Activated naive CD8-positive, alpha-beta T cell treated with anti-CD3 and anti-CD28 coated beads, Interleukin-2, amount 10 ng/mL, durations not matched to agents 7 days and 5 days (primary cell): ENCODE measurements at regions of chr5 and their contacts with region 1.

Region 1: DNA sequence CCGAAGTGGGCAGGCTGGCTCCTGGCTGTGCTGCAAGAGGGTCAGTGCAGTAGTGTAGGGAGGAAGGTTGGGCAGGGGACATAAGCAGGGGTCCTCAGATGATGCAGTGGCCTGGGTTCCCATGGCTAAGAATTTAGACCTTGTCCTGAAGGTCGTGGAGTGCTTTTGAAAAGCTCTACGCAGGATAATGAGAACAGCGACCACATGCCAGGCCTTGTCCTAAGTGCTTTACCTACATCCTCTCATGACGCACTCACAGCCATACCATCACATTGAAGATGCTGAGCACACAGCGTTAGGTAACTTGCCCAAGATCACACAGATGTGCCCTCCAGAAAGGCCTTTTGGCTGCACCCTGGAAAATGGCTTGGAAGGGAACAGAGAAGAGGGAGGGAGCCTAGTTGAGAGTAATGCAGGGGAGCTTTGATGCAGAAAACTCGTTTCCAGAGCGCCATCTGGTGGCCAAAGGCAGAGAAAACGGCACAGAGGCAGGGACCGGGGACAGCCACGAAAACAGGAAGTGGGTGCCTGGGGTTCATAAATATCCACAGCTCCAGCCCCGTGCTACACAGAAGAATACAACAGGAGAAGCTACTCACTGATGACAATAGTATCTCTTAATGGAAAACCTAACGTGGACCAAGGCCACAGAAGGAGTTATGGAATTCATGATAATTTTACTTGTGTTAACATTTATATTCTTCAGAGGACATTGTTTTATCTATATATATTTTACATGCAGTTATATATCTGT is 2.6 kb upstream of the PCDH12 start:
- DNase-seq: peak; percentile 87
- ATAC-seq: peak; percentile 87
- H3K4me3 Mint-ChIP-seq: peak overlapping the region; percentile 51
- H3K27ac Mint-ChIP-seq: peak overlapping the region; percentile 81
- H3K4me1 Mint-ChIP-seq: peaks cover 36% of the 10 kb centered on the region
- H3K27me3 Mint-ChIP-seq: no peaks in the 10 kb centered on the region

Region 2: GRCh38 chr5:141691867-141692532 is 268.6 kb before region 1 on chr5:
- POLR2A ChIA-PET with region 1: interaction called, 11 read pairs
- DNase-seq: peak; percentile 91
- ATAC-seq: peak; percentile 87
- H3K4me3 Mint-ChIP-seq: peak overlapping the region; percentile 86
- H3K27ac Mint-ChIP-seq: peak overlapping the region; percentile 77
- H3K4me1 Mint-ChIP-seq: peaks cover 27% of the 10 kb centered on the region
- H3K27me3 Mint-ChIP-seq: peaks cover 17% of the 10 kb centered on the region

Region 3: DNA sequence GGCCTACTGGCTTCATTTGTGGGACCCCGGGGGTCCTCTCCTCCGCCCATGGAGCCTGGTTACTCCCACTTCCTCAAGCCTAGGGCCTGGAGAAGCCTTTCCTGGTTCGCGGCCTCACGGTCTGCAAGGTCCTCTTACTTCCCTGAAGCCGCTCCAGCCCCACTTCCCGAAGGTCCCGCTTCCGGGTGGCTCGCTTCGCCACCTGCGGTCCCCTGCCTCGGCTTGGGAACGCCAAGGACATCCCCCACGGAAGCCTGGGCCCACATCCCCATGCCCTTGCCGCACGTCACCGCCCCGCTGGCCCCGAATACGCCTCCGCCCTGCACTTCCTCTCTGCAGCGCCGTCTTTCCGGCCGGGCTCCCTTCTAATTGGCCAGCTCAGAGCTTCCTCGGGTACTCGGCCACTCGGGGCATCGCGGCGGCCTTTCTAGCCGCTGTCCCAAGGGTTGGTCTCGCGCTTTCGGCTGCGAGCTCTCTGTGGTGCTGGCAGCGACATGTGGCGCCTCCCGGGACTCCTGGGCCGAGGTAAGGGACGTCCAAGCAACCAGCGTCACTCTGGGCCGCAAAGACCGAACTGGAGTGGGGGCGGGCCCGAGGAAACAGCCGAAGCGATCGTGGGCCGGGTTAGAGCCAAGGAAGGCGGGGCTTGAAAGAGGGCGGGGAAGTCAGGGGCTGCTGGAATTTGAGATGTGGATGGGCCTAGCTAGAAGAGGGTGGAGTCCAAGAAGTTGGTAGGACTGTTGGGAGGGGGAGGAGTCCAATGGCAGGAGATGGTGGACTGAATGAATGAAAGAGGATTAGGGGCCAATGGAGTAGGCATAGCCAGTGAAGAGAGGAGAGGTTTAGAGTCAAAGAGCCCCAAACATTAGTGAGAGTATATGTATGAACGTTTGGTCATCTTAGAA is 36.9 kb before region 1 on chr5 and contains the start of gene DELE1:
- POLR2A ChIA-PET with region 1: interaction called, 34 read pairs
- DNase-seq: peak; percentile 91
- ATAC-seq: peak; percentile 98
- H3K4me3 Mint-ChIP-seq: peak within 1 kb of the TSS; percentile 94
- H3K27ac Mint-ChIP-seq: peak within 1 kb of the TSS; percentile 92
- H3K4me1 Mint-ChIP-seq: peaks cover 12% of the 10 kb centered on the region
- H3K27me3 Mint-ChIP-seq: no peaks in the 10 kb centered on the region
- total RNA-seq, gene DELE1: 71.2 to 73.1 TPM

Region 4: GRCh38 chr5:141992349-141992963 is 31.8 kb after region 1 on chr5:
- POLR2A ChIA-PET with region 1: no interaction called
- DNase-seq: peak; percentile 68
- ATAC-seq: peak; percentile 82
- H3K4me3 Mint-ChIP-seq: no peak overlapping the region
- H3K27ac Mint-ChIP-seq: no peak overlapping the region
- H3K4me1 Mint-ChIP-seq: peaks cover 3% of the 10 kb centered on the region
- H3K27me3 Mint-ChIP-seq: no peaks in the 10 kb centered on the region

Region 5: DNA sequence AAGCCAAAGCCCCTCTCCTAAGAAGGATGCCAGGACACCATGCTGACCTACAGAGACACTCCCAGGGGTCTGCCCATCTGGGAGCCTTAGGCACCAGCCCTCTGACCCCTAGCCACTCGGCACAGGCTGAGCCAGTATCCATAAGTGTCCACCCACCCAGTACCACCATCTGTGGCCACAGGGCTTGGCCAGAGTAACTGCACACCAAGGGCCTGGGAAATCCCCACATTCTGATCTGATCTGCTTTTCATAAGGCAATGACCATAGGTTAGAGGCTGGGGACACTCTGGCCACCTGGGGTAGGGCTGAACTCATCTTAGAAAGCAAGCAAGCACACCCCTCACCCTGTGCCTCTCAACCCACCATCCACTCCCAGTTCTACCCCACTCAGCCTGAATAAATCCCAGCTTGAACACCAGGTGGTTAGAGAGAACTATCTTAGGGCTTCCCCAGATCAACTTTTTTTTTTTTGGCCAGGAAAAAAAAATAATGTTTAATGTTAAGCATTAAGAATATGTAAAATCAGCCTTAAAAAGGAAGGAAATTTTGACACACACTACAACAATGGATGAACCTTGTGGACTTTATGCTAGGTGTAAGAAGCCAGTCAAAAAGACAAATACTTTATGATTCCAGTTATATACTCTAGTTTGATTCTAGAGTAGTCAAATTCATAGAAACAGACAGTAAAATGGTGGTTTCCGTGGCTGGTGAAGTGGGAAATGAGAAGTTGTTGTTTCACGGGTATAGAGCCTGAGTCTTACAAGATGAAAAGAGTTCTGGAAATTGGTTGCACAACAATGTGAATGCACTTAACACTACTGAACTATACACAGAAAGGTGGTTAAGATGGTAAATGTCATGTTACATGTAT is 46.0 kb after region 1 on chr5:
- POLR2A ChIA-PET with region 1: no interaction called
- DNase-seq: no peak
- ATAC-seq: peak; percentile 91
- H3K4me3 Mint-ChIP-seq: peak overlapping the region; percentile 78
- H3K27ac Mint-ChIP-seq: peak overlapping the region; percentile 96
- H3K4me1 Mint-ChIP-seq: peaks cover 62% of the 10 kb centered on the region
- H3K27me3 Mint-ChIP-seq: no peaks in the 10 kb centered on the region